ENCODE measurements at regions of chr10 and their contacts with region 1.

Region 1: DNA sequence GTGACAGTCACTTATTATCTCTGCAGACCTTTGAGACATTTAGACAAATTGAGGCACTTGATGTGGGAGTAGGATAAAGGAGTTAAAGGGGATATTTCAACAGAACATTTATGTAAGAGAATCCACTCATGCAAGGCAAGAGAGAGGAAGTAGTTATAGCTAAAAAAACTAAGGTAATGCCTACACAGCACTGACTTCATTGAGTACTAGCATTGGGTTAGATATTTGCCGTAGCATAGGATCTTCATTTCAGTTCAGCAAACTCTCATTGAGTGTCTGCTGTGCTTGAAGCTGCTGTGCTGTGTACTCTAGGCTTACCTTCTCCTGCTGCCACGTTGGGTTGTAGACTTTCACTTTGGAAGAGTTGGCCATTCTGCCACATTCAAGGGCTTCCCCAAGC is 10.5 kb upstream of the ENTPD1 start:
- DNase-seq: no peak
- ATAC-seq: no peak
- H3K4me3 ChIP-seq: no peak overlapping the region
- H3K27ac ChIP-seq: no peak overlapping the region
- H3K4me1 ChIP-seq: peaks cover 0 to 11% (median 0%) of the 10 kb centered on the region in 3 donors
- H3K27me3 ChIP-seq: no peaks in the 10 kb centered on the region
- CTCF ChIP-seq: no peak

Region 2: DNA sequence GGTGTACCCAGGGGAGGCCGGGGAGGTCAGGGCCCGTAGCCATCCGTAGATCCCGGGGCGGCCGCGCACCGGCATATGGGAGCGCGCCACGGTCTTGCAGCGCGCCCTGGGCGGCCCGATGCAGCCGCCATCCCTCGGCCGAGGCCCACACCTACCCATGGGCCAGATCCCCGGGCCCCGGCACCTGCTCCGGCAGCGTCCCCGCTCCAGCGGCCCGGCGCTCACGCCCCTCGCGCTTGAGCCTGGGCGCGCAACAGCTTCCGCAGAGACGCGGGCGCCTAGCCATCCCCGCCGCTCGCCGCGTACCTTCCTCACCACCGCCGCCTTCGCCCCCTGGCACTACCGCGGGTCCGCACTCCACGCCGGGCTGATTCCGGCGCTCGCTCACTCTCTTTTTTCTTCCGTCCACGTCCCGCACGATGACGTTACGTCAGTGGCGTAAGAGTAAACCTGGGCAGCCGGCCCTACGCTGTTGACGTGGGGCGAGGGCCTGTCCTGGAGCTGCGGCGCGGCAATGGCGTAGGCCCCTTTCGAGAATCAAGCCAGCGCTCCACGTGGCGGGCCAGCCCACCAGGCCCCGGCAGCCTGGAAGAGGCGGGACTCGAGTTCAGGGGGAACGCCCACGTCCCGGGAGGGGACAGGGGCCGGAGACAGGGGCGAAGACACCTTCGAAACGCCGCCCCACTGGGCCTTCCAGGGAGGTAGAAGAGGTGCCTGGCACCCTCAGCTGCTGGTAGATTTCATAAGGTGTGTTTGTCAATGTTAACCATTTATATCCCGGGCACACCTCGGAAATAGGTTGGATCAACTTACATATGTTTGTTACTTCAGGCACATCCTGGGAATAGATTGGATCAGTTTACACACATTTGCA is 89.0 kb before region 1 on chr10 and contains the start of gene ALDH18A1:
- intact Hi-C with region 1: no loop called
- DNase-seq: peak; percentile 93 to 97 (median 94)
- ATAC-seq: peak; percentile 92 to 96 (median 94)
- H3K4me3 ChIP-seq: peak within 1 kb of the TSS; percentile 69 to 99 (median 92)
- H3K27ac ChIP-seq: peak within 1 kb of the TSS; percentile 53 to 87 (median 81)
- H3K4me1 ChIP-seq: peaks cover 0 to 12% (median 0%) of the 10 kb centered on the region in 3 donors
- H3K27me3 ChIP-seq: no peaks in the 10 kb centered on the region
- CTCF ChIP-seq: no peak
- total RNA-seq, gene ALDH18A1: 43.3 to 68.4 (median 54.9) TPM

Region 3: DNA sequence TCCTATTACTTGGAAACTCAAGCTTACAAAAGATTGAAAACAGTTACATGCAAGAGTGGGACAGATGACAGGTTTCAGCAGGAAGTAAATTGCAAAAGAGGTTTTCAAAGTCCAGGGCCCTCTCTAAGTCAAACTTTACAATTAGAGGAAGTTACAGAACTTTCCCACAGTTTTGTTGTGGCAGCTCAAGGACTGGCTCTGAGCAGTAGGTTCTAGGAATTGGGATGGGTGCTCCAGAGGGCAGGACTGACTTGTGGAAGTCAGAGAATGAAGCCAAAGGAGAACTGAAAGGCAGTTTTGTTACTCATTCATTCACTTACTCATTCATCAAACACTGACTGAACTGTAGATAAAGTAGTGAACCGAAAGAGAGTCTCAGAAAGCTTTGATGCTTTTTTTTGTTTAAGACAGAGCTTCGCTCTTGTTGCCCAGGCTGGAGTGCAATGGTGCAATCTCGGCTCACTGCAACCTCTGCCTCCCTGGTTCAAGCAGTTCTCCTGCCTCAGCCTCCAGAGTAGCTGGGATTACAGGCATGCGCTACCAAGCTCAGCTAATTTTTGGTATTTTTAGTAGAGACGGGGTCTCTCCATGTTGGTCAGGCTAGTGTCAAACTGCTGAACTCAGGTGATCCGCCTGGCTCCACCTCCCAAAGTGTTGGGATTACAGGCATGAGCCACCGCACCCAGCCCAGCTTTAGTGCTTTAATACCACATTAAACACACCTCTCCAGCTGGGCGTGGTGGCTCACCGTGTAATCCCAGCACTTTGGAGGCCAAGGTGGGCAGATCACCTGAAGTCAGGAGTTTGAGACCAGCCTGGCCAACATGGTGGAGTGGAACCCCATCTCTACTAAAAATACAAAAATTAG is 231.1 kb after region 1 on chr10:
- intact Hi-C with region 1: loop called in 1 of 3 experiments (anchors 5 kb)
- DNase-seq: no peak
- ATAC-seq: no peak
- H3K4me3 ChIP-seq: no peak overlapping the region
- H3K27ac ChIP-seq: peak overlapping the region in 1 of 4 donors; percentile 16
- H3K4me1 ChIP-seq: no peaks in the 10 kb centered on the region
- H3K27me3 ChIP-seq: no peaks in the 10 kb centered on the region
- CTCF ChIP-seq: no peak